Heart left ventricle (tissue), 16 donors: ENCODE measurements at regions of chr19 and their contacts with region 1.

Region 1: DNA sequence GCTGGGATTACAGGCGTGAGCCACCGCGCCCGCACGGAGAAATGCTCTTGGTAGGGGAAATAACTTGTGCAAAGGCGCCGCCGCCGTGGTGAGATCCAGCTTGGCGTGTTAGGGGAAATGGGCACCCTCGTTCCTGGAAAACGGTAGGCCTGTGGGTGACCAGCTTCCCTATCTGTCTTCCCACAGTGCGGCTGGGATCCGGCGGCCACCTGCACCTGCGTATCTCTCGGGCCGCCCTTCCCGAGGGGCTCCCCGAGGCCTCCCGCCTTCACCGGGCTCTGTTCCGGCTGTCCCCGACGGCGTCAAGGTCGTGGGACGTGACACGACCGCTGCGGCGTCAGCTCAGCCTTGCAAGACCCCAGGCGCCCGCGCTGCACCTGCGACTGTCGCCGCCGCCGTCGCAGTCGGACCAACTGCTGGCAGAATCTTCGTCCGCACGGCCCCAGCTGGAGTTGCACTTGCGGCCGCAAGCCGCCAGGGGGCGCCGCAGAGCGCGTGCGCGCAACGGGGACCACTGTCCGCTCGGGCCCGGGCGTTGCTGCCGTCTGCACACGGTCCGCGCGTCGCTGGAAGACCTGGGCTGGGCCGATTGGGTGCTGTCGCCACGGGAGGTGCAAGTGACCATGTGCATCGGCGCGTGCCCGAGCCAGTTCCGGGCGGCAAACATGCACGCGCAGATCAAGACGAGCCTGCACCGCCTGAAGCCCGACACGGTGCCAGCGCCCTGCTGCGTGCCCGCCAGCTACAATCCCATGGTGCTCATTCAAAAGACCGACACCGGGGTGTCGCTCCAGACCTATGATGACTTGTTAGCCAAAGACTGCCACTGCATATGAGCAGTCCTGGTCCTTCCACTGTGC is 2.4 kb downstream of the GDF15 start:
- DNase-seq: peak; percentile 84 to 93 (median 86)
- ATAC-seq: peak; percentile 64 to 94 (median 88)
- H3K4me3 ChIP-seq: peak overlapping the region in 11 of 12 donors; percentile 3 to 59 (median 43)
- H3K27ac ChIP-seq: peak overlapping the region in 11 of 12 donors; percentile 10 to 86 (median 30)
- H3K4me1 ChIP-seq: peaks cover 0 to 44% (median 15%) of the 10 kb centered on the region in 12 donors
- H3K27me3 ChIP-seq: no peaks in the 10 kb centered on the region
- CTCF ChIP-seq: peak; percentile 99 to 100 (median 100)
- POLR2A ChIP-seq: no peak

Region 2: DNA sequence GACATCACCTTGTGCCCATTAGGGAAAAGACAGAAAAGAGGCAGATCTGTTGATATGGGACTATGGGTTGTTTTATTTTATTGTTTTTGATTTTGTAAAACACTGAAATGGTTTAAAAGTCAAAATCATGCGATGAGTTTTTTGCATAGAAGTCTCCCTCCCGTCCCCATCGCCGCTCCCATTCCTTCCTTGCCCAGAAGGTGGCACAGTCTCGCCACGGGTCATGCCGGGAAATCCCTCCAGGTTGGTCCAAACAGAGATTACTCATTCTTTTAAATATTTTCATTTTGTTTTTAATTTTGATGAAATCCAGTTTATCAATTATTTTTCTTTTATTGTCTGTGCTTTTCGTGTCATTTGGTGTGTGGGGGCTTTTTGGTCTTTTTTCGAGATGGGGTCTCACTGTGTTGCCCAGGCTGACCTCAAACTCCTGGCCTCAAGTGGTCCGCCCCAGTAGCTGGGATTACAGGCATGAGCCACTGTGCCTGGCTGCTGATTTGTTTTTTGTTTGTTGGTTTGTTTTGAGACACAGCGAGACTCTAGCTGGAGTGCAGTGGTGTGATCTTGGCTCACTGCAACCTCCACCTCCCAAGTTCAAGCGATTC is 38.7 kb before region 1 on chr19:
- intact Hi-C with region 1: loop called in 2 of 10 experiments (anchors 5 kb)
- DNase-seq: peak in 4 of 5 donors; percentile 45 to 59 (median 46)
- ATAC-seq: peak in 2 of 4 donors; percentile 64 to 67
- H3K4me3 ChIP-seq: no peak overlapping the region
- H3K27ac ChIP-seq: no peak overlapping the region
- H3K4me1 ChIP-seq: peaks cover 0 to 3% (median 0%) of the 10 kb centered on the region in 12 donors
- H3K27me3 ChIP-seq: no peaks in the 10 kb centered on the region
- CTCF ChIP-seq: peak; percentile 63 to 83 (median 71)
- POLR2A ChIP-seq: no peak

Region 3: GRCh38 chr19:18357041-18357440 is 31.3 kb before region 1 on chr19:
- intact Hi-C with region 1: loop called in 4 of 10 experiments (anchors 5 kb)
- DNase-seq: no peak
- ATAC-seq: peak in 1 of 4 donors; percentile 20
- H3K4me3 ChIP-seq: no peak overlapping the region
- H3K27ac ChIP-seq: no peak overlapping the region
- H3K4me1 ChIP-seq: peaks cover 0 to 5% (median 0%) of the 10 kb centered on the region in 12 donors
- H3K27me3 ChIP-seq: no peaks in the 10 kb centered on the region
- CTCF ChIP-seq: no peak
- POLR2A ChIP-seq: no peak

Region 4: DNA sequence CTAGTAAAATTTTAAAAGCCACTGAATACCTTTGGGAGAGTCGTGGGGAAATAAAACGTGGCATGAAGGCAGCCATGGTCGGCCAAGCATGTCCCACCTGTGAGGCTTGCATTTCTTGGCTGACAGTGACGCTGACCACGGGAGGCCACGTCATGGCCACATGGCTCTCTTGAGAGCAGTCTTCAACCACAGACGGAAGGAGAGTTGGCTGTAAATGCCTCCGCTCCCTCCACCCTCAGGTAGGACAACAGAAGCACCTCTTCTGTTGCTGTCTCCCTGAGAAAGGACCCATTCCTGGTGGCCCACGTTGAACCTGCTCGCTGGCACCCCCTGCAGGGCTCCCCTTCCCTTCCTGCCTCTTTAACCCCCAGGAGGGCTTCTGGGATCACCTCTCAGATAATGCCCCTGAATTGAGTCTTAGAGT is 19.7 kb after region 1 on chr19:
- intact Hi-C with region 1: loop called in 3 of 10 experiments (anchors 1 to 2 kb)
- DNase-seq: peak in 2 of 5 donors; percentile 41 to 44
- ATAC-seq: peak in 2 of 4 donors; percentile 22 to 30
- H3K4me3 ChIP-seq: no peak overlapping the region
- H3K27ac ChIP-seq: no peak overlapping the region
- H3K4me1 ChIP-seq: peaks cover 0 to 4% (median 0%) of the 10 kb centered on the region in 12 donors
- H3K27me3 ChIP-seq: no peaks in the 10 kb centered on the region
- CTCF ChIP-seq: peak; percentile 16 to 51 (median 40)
- POLR2A ChIP-seq: no peak

Region 5: GRCh38 chr19:18419195-18419698 is 30.9 kb after region 1 on chr19 and contains the start of gene SSBP4:
- intact Hi-C with region 1: no loop called
- DNase-seq: peak; percentile 74 to 88 (median 84)
- ATAC-seq: peak in 2 of 4 donors; percentile 10 to 22
- H3K4me3 ChIP-seq: peak within 1 kb of the TSS; percentile 52 to 99 (median 80)
- H3K27ac ChIP-seq: peak within 1 kb of the TSS; percentile 89 to 100 (median 95)
- H3K4me1 ChIP-seq: peaks cover 8 to 90% (median 69%) of the 10 kb centered on the region in 12 donors
- H3K27me3 ChIP-seq: peaks cover 0 to 22% (median 0%) of the 10 kb centered on the region in 9 donors
- CTCF ChIP-seq: peak in 8 of 12 donors; percentile 14 to 69 (median 45)
- POLR2A ChIP-seq: peak in 1 of 2 donors; percentile 50
- total RNA-seq, gene SSBP4: 23.5 to 89.8 (median 29.4) TPM

Region 6: DNA sequence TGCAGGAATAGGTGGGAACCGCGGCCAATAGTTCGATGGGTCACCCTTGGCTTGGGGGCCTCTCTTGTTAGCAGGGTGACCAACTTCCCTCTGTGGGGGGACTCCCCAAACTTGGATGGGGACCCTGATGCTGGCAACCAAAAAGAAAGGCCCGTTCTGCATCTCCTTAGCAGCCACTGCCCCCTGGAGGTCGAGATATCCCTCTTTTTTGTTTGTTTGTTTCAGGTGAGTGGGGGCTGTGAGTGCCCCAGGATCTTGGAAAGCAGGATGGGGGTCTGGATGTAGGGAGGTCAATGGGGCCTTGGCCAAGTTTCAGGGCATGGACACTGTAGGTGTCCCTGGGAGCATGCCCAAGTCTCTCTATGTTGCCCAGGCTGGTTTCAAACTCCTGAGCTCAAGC is 287.4 kb after region 1 on chr19:
- intact Hi-C with region 1: no loop called
- DNase-seq: no peak
- ATAC-seq: no peak
- H3K4me3 ChIP-seq: no peak overlapping the region
- H3K27ac ChIP-seq: no peak overlapping the region
- H3K4me1 ChIP-seq: peaks cover 0 to 23% (median 9%) of the 10 kb centered on the region in 12 donors
- H3K27me3 ChIP-seq: no peaks in the 10 kb centered on the region
- CTCF ChIP-seq: peak in 9 of 12 donors; percentile 18 to 49 (median 35)
- POLR2A ChIP-seq: no peak